Heart right ventricle (tissue), 16 donors: ENCODE measurements at regions of chr13 and their contacts with region 1.

Region 1: DNA sequence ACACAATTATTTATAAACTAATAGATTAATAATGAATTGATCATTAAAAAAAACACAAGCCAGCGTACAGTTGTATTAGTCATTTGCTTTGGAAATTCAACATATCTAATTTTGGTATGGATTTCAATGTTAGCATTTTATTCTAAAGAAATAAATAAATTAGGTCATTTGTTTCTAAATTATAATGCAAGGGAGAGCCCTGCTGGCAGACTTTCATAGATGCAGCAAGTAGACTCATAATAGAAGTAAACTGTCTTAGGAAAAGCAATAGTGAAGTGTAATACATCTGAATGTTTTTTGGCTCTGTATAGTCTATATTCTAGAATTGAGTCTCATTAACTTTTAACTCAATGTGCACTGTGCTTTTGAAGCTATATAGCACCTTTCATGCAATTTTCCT is 982.4 kb upstream of the MIR17HG start:
- DNase-seq: no peak
- ATAC-seq: no peak
- H3K4me3 ChIP-seq: no peak overlapping the region
- H3K27ac ChIP-seq: no peak overlapping the region
- H3K4me1 ChIP-seq: no peaks in the 10 kb centered on the region
- H3K27me3 ChIP-seq: no peaks in the 10 kb centered on the region
- CTCF ChIP-seq: peak in 8 of 9 donors; percentile 12 to 52 (median 32)

Region 2: GRCh38 chr13:89951341-89951740 is 413.8 kb before region 1 on chr13:
- intact Hi-C with region 1: loop called in 1 of 10 experiments (anchors 10 kb)
- DNase-seq: no peak
- ATAC-seq: peak in 3 of 8 donors; percentile 49 to 79 (median 69)
- H3K4me3 ChIP-seq: no peak overlapping the region
- H3K27ac ChIP-seq: no peak overlapping the region
- H3K4me1 ChIP-seq: no peaks in the 10 kb centered on the region
- H3K27me3 ChIP-seq: no peaks in the 10 kb centered on the region
- CTCF ChIP-seq: peak in 4 of 9 donors; percentile 11 to 26 (median 14)

Region 3: DNA sequence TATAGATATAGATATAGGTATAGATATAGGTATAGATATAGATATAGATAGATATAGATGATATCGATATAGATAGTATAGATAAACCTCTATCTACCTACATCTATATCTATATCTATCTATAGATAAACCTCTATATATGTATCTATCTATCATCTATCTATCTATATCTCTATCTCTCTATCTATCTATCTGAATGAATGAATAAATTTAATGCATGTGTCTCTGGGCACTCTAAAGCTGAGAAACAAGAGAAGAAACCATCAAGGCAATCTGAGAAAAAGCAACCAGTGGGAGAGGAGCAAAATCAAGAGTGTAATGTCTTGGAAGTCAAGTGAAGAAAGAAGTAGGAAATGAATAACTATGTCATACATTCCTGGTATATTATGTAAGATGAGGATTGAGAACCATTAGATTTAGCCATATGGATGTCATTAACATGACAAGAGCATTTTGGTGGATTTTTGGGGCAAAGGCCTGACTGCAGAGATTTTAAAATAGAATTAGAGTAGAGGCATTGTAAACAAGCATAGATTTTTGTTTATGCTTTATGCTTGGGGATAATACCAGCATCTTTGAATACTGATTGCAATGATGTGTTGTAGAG is 280.3 kb before region 1 on chr13:
- intact Hi-C with region 1: loop called in 1 of 10 experiments (anchors 10 kb)
- DNase-seq: no peak
- ATAC-seq: no peak
- H3K4me3 ChIP-seq: no peak overlapping the region
- H3K27ac ChIP-seq: no peak overlapping the region
- H3K4me1 ChIP-seq: no peaks in the 10 kb centered on the region
- H3K27me3 ChIP-seq: no peaks in the 10 kb centered on the region
- CTCF ChIP-seq: no peak

Region 4: GRCh38 chr13:90867336-90867683 is 502.2 kb after region 1 on chr13:
- intact Hi-C with region 1: loop called in 1 of 10 experiments (anchors 10 kb)
- DNase-seq: peak; percentile 31 to 34
- ATAC-seq: peak in 7 of 8 donors; percentile 58 to 79 (median 74)
- H3K4me3 ChIP-seq: no peak overlapping the region
- H3K27ac ChIP-seq: no peak overlapping the region
- H3K4me1 ChIP-seq: no peaks in the 10 kb centered on the region
- H3K27me3 ChIP-seq: no peaks in the 10 kb centered on the region
- CTCF ChIP-seq: peak; percentile 40 to 65 (median 61)